ENCODE measurements at regions of chr3 and their contacts with region 1.

Region 1: DNA sequence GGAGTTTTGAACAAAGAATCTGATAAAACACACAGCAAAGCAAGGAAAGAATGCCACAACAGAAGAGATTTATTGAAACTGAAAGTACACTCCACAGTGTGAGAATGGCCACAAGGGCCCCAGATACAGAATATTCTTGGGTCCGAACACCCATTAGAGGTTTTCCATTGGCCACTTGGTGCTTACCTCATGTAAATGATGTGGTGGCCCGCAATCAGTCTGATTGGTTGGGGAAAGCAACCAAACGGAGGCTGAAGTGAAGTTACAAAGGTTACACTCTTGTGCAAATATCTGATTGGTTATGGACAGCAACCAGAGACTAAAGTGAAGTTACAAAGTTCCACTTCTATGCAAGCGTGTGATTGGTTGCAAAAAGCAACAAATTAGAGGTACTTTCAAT is 20.4 kb downstream of the NSUN3 start:
- DNase-seq: no peak
- H3K4me3 ChIP-seq: no peak overlapping the region
- H3K27ac ChIP-seq: no peak overlapping the region
- H3K4me1 ChIP-seq: no peaks in the 10 kb centered on the region
- H3K27me3 ChIP-seq: no peaks in the 10 kb centered on the region
- CTCF ChIP-seq: no peak
- POLR2A ChIP-seq: no peak

Region 2: GRCh38 chr3:94069194-94069813 is 14.0 kb before region 1 on chr3:
- CTCF ChIA-PET with region 1: interaction called, 11 read pairs
- POLR2A ChIA-PET with region 1: no interaction called
- dilution Hi-C with region 1: no loop called
- intact Hi-C with region 1: no loop called
- DNase-seq: peak; percentile 32
- H3K4me3 ChIP-seq: no peak overlapping the region
- H3K27ac ChIP-seq: no peak overlapping the region
- H3K4me1 ChIP-seq: peaks cover 6% of the 10 kb centered on the region
- H3K27me3 ChIP-seq: no peaks in the 10 kb centered on the region
- CTCF ChIP-seq: peak; percentile 21 to 29
- POLR2A ChIP-seq: no peak

Region 3: DNA sequence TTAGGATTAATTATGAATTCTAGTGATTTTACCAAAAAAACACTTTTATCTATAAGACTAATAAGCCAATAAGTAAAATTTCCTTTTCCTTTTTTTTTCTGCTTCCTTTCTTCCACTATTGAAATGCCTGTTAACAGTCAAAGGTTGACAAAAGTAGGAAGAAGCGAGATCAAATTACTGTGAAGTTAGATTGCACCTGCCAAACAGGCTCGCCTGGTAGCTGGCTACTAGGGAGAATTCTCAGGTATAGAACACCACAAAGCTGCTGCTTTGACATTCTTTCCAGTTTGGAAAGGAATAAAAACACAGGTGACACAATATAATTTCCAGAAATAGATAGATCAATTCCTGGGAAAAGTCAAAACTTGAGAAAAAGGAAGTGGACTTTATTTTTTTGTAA is 728.6 kb after region 1 on chr3:
- CTCF ChIA-PET with region 1: no interaction called
- POLR2A ChIA-PET with region 1: no interaction called
- dilution Hi-C with region 1: no loop called
- intact Hi-C with region 1: no loop called
- DNase-seq: no peak
- H3K4me3 ChIP-seq: no peak overlapping the region
- H3K27ac ChIP-seq: no peak overlapping the region
- H3K4me1 ChIP-seq: no peaks in the 10 kb centered on the region
- H3K27me3 ChIP-seq: no peaks in the 10 kb centered on the region
- CTCF ChIP-seq: no peak
- POLR2A ChIP-seq: no peak